ENCODE measurements at regions of chrX and their contacts with region 1.

Region 1: DNA sequence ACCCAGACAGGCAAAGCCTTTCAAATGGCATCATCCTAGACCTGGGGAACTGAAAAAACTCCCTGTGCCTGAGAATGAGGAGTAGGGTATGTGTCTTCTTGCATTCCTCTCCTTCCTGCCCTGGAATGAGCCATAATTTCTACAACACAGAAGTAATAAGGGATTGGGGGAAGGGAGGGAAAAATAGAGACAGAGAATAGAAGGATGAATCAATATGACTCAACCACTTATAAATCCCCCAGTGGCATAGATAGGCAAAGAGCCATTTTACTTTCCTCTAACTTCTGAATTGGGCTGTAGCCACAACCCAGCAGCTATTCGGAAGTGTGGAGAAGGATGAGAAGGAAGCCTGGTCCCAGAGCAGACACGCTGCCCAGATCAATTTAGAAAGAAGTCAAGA is 99.9 kb downstream of the NHS start:
- DNase-seq: peak; percentile 55
- ATAC-seq: peak; percentile 42
- H3K4me3 ChIP-seq: no peak overlapping the region
- H3K27ac ChIP-seq: no peak overlapping the region
- H3K4me1 ChIP-seq: peaks cover 3% of the 10 kb centered on the region
- H3K27me3 ChIP-seq: peaks cover 4% of the 10 kb centered on the region
- CTCF ChIP-seq: no peak
- POLR2A ChIP-seq: no peak
- RAD21 ChIP-seq: no peak

Region 2: GRCh38 chrX:15718283-15718970 is 1756.5 kb before region 1 on chrX:
- CTCF ChIA-PET with region 1: no interaction called
- POLR2A ChIA-PET with region 1: no interaction called
- dilution Hi-C with region 1: no loop called
- in situ Hi-C with region 1: no loop called
- intact Hi-C with region 1: loop called (anchors 5 kb)
- DNase-seq: no peak
- ATAC-seq: no peak
- H3K4me3 ChIP-seq: no peak overlapping the region
- H3K27ac ChIP-seq: no peak overlapping the region
- H3K4me1 ChIP-seq: no peaks in the 10 kb centered on the region
- H3K27me3 ChIP-seq: no peaks in the 10 kb centered on the region
- CTCF ChIP-seq: no peak
- POLR2A ChIP-seq: no peak
- RAD21 ChIP-seq: no peak

Region 3: DNA sequence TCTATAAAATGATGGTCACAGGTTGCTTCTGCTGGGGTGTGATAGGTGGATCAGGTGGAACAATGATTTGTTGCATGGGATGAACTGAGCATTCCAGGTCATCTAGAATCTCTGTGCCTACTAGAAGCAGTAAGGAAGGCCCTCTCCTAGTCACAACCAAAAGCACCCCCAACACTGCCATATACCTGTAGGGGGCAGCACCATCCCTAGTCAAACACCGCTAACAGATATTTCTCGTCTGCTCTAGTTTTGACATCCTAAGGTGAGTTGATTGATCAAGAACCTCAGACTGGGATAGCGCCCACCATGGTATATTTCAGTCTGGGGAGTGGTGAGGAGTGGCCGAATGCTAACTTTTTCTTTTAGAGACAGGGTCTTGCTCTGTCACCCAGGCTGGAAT is 60.3 kb after region 1 on chrX:
- CTCF ChIA-PET with region 1: no interaction called
- POLR2A ChIA-PET with region 1: no interaction called
- dilution Hi-C with region 1: no loop called
- in situ Hi-C with region 1: no loop called
- intact Hi-C with region 1: loop called (anchors 10 kb)
- DNase-seq: peak; percentile 20
- ATAC-seq: no peak; the same call in 1 of the 2 replicates
- H3K4me3 ChIP-seq: no peak overlapping the region
- H3K27ac ChIP-seq: no peak overlapping the region
- H3K4me1 ChIP-seq: no peaks in the 10 kb centered on the region
- H3K27me3 ChIP-seq: no peaks in the 10 kb centered on the region; the same call in none of the 2 replicates
- CTCF ChIP-seq: peak; percentile 52
- POLR2A ChIP-seq: no peak
- RAD21 ChIP-seq: peak; percentile 71

Region 4: GRCh38 chrX:17608898-17609297 is 134.0 kb after region 1 on chrX:
- CTCF ChIA-PET with region 1: no interaction called
- POLR2A ChIA-PET with region 1: no interaction called
- dilution Hi-C with region 1: no loop called
- in situ Hi-C with region 1: no loop called
- intact Hi-C with region 1: no loop called
- DNase-seq: no peak
- ATAC-seq: no peak
- H3K4me3 ChIP-seq: no peak overlapping the region
- H3K27ac ChIP-seq: no peak overlapping the region
- H3K4me1 ChIP-seq: peaks cover 5% of the 10 kb centered on the region
- H3K27me3 ChIP-seq: no peaks in the 10 kb centered on the region; the same call in none of the 2 replicates
- CTCF ChIP-seq: no peak
- POLR2A ChIP-seq: no peak
- RAD21 ChIP-seq: no peak

Region 5: GRCh38 chrX:18390941-18391538 is 916.1 kb after region 1 on chrX:
- CTCF ChIA-PET with region 1: no interaction called
- POLR2A ChIA-PET with region 1: no interaction called
- dilution Hi-C with region 1: no loop called
- in situ Hi-C with region 1: no loop called
- intact Hi-C with region 1: no loop called
- DNase-seq: peak; percentile 63
- ATAC-seq: peak; percentile 71
- H3K4me3 ChIP-seq: no peak overlapping the region
- H3K27ac ChIP-seq: no peak overlapping the region
- H3K4me1 ChIP-seq: no peaks in the 10 kb centered on the region
- H3K27me3 ChIP-seq: no peaks in the 10 kb centered on the region
- CTCF ChIP-seq: peak; percentile 73
- POLR2A ChIP-seq: no peak
- RAD21 ChIP-seq: peak; percentile 72